Psoas muscle (tissue), 8 donors: ENCODE measurements at regions of chr17 and their contacts with region 1.

Region 1: DNA sequence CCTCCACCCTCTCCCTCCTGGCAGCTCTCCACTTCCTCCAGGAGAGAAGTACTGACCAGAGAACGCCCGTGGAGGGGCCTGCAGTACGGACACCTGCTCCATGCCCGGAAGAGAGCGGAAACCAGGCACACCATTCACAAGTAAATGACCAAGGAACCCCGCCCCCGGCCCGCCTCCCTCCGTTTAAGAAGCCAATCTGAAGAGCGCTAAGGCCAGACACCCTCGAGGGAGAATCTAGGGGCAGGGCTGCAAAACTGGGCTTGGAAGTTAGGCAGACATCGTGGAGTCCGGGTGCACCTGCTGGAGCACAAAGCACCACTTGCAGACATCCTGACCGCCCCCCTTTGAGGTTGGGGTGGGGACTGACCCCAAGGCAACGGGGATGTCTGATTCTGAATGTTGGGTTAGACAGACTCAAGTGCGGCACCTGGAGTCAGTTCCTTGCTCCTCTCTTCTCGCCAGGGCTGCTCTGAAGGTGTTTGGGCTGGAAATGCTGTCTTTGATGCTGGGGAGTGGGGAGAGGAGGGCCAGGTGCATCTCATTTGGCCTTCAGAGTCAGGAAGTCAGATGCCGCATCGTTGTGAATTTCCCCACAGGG is 964 bp upstream of the FAAP100 start:
- DNase-seq: peak; percentile 75 to 77
- ATAC-seq: peak; percentile 20 to 54 (median 32)
- H3K4me3 ChIP-seq: peak overlapping the region; percentile 96
- H3K27ac ChIP-seq: peak overlapping the region; percentile 81
- H3K4me1 ChIP-seq: peaks cover 44% of the 10 kb centered on the region
- H3K27me3 ChIP-seq: no peaks in the 10 kb centered on the region
- CTCF ChIP-seq: no peak

Region 2: GRCh38 chr17:81512560-81513371 is 40.4 kb before region 1 on chr17 and contains the start of gene ACTG1:
- intact Hi-C with region 1: loop called in 1 of 2 experiments (anchors 5 kb)
- DNase-seq: peak; percentile 93 to 97
- ATAC-seq: peak; percentile 63 to 73 (median 70)
- H3K4me3 ChIP-seq: peak within 1 kb of the TSS; percentile 86
- H3K27ac ChIP-seq: peak within 1 kb of the TSS; percentile 100
- H3K4me1 ChIP-seq: peaks cover 23% of the 10 kb centered on the region
- H3K27me3 ChIP-seq: no peaks in the 10 kb centered on the region
- CTCF ChIP-seq: no peak
- total RNA-seq, gene ACTG1: 341 to 567 (median 431) TPM